ENCODE measurements at regions of chr13 and their contacts with region 1.

Region 1: DNA sequence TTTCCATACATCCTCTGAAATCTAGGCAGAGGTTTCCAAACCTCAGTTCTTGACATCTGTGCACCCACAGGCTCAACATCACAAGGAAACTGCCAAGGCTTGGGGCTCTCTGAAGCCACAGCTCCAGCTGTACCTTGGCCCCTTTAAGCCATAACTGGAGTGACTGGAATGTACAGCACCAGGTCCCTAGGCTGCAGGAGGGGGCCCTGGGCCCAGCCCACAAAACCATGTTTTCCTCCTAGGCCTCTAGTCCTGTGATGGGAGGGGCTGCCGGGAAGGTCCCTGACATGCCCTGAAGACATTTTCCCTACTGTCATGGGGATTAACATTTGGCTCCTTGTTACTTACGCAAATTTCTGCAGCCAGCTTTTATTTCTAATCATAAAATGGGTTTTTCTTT is 1093.0 kb upstream of the PCDH9 start:
- DNase-seq: no peak
- H3K4me3 ChIP-seq: no peak overlapping the region
- H3K27ac ChIP-seq: no peak overlapping the region
- H3K4me1 ChIP-seq: no peaks in the 10 kb centered on the region
- H3K27me3 ChIP-seq: no peaks in the 10 kb centered on the region
- CTCF ChIP-seq: no peak
- POLR2A ChIP-seq: no peak

Region 2: DNA sequence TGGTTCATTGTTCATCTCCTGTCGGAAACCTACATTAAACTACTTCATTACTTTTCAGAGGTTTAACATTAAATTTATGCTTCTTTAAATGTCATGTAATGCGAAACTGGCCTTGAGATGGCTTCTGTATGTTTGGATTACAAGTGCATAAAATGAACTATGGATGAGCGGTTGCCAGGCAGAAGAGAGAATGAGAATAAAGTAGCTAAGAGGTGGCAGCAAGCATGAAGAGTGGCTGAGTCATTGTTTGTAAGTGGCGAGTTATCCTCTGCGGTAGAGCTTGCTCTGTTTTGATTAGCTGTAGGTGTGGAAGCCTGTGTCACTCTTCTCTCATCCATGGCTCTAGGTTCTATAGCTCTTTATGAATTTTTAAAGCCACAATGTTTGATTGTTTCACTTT is 46.6 kb after region 1 on chr13:
- intact Hi-C with region 1: no loop called
- DNase-seq: no peak
- H3K4me3 ChIP-seq: no peak overlapping the region
- H3K27ac ChIP-seq: no peak overlapping the region
- H3K4me1 ChIP-seq: no peaks in the 10 kb centered on the region
- H3K27me3 ChIP-seq: no peaks in the 10 kb centered on the region
- CTCF ChIP-seq: no peak
- POLR2A ChIP-seq: no peak

Region 3: DNA sequence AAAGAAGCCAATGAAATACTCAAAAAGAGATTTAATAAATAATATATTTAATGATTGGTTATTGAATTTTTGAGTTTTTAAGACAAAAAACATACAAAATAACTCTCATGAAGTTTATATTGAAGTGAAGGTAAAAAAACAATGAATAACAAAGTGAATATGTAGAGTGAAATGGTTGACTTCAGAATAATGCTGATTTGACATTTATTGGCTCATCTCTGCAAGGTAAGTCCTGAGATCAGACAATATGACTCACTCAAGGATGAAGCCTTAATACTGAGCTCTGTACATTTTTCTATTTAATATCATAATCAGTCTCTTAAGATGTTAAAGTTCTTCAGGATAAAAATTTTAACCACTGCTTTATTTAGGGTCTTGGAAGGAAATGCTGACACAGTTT is 305.9 kb after region 1 on chr13:
- intact Hi-C with region 1: loop called (anchors 5 kb)
- DNase-seq: no peak
- H3K4me3 ChIP-seq: no peak overlapping the region
- H3K27ac ChIP-seq: no peak overlapping the region
- H3K4me1 ChIP-seq: no peaks in the 10 kb centered on the region
- H3K27me3 ChIP-seq: no peaks in the 10 kb centered on the region
- CTCF ChIP-seq: no peak
- POLR2A ChIP-seq: no peak

Region 4: DNA sequence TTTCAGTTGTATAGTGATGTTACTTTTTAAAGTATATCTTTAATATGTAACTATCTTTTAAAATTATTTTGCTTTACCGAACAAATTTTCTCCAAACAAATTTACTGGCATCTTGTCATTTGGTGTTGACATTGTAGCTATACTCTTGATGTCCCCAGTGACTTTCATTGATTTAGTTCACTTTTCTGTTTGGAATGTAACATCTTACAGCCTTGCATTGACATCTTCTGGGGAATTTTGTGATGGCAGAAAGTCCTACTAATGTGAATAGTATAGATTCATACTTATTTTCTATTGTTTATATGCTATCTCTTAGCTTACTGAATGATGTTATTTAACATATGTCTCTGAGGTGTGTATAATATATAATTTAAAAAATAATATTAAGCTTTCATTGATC is 983.6 kb after region 1 on chr13:
- intact Hi-C with region 1: loop called (anchors 5 kb)
- DNase-seq: no peak
- H3K4me3 ChIP-seq: no peak overlapping the region
- H3K27ac ChIP-seq: no peak overlapping the region
- H3K4me1 ChIP-seq: no peaks in the 10 kb centered on the region
- H3K27me3 ChIP-seq: no peaks in the 10 kb centered on the region
- CTCF ChIP-seq: no peak
- POLR2A ChIP-seq: no peak